Heart left ventricle (tissue), 16 donors: ENCODE measurements at regions of chr12 and their contacts with region 1.

Region 1: DNA sequence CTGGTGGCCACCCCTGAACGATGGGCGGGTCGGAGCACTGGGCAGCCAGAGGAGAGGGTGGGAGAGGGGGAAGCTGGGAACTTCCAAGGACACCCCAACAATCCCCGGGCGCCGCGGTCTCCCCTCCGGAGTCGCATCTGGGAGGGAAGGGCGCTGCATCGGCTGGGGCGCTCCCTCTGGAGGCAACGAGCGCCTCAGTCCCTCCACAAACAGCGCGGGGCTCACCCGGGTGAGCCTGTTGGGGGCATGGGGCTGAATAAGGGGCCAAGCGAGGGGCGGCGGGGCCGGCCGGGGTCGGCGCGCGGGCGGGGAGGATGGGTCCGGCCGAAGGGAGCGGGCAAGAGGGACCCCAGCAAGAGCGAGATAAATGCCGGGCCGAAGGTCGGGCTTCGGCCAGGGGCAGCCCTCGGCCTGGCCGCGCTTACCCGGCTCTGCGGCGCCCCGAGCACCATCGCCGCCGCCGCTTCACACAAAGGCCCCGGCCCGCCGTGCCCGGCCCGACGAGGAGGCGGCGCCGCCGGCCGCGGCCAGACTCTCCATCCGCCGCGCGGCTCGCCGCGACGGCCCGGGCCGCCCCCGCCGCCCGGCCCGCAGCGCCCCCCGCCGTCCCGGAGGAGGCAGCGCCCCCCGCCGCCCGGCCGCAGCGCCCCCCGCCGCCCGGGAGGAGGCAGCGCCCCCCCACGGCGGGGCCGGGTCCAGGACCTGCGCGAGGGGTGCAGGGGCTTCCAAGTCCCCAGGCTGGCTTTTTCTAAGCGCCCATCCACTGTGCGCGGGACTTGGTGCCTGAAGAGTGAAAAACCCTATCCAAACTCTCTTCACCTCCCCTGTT is at the start of gene ZBTB39:
- DNase-seq: peak; percentile 58 to 84 (median 68)
- ATAC-seq: peak; percentile 52 to 89 (median 76)
- H3K4me3 ChIP-seq: peak within 1 kb of the TSS; percentile 83 to 100 (median 96)
- H3K27ac ChIP-seq: peak within 1 kb of the TSS; percentile 19 to 92 (median 84)
- H3K4me1 ChIP-seq: peaks cover 0 to 30% (median 23%) of the 10 kb centered on the region in 12 donors
- H3K27me3 ChIP-seq: no peaks in the 10 kb centered on the region
- CTCF ChIP-seq: peak; percentile 40 to 76 (median 66)
- POLR2A ChIP-seq: no peak
- total RNA-seq, gene ZBTB39: 2.7 to 4.5 (median 3.6) TPM

Region 2: GRCh38 chr12:56616925-56617324 is 389.3 kb before region 1 on chr12:
- intact Hi-C with region 1: no loop called
- DNase-seq: no peak
- ATAC-seq: peak; percentile 78 to 84 (median 82)
- H3K4me3 ChIP-seq: no peak overlapping the region
- H3K27ac ChIP-seq: peak overlapping the region in 8 of 12 donors; percentile 23 to 80 (median 63)
- H3K4me1 ChIP-seq: peaks cover 0 to 68% (median 29%) of the 10 kb centered on the region in 12 donors
- H3K27me3 ChIP-seq: no peaks in the 10 kb centered on the region
- CTCF ChIP-seq: no peak
- POLR2A ChIP-seq: no peak

Region 3: GRCh38 chr12:56839915-56840325 is 166.3 kb before region 1 on chr12:
- intact Hi-C with region 1: loop called in 1 of 10 experiments (anchors 10 kb)
- DNase-seq: peak; percentile 26 to 68 (median 32)
- ATAC-seq: peak in 3 of 4 donors; percentile 46 to 56 (median 54)
- H3K4me3 ChIP-seq: no peak overlapping the region
- H3K27ac ChIP-seq: no peak overlapping the region
- H3K4me1 ChIP-seq: peaks cover 0 to 30% (median 6%) of the 10 kb centered on the region in 12 donors
- H3K27me3 ChIP-seq: no peaks in the 10 kb centered on the region
- CTCF ChIP-seq: peak; percentile 20 to 56 (median 40)
- POLR2A ChIP-seq: no peak

Region 4: GRCh38 chr12:56947633-56948456 is 58.3 kb before region 1 on chr12:
- intact Hi-C with region 1: loop called in 2 of 10 experiments (anchors 5 kb)
- DNase-seq: no peak
- ATAC-seq: no peak
- H3K4me3 ChIP-seq: no peak overlapping the region
- H3K27ac ChIP-seq: no peak overlapping the region
- H3K4me1 ChIP-seq: no peaks in the 10 kb centered on the region
- H3K27me3 ChIP-seq: no peaks in the 10 kb centered on the region
- CTCF ChIP-seq: peak in 5 of 12 donors; percentile 25 to 39 (median 34)
- POLR2A ChIP-seq: no peak

Region 5: GRCh38 chr12:57063991-57064685 is 57.9 kb after region 1 on chr12:
- intact Hi-C with region 1: loop called in 6 of 10 experiments (anchors 2 to 5 kb)
- DNase-seq: no peak
- ATAC-seq: no peak
- H3K4me3 ChIP-seq: peak overlapping the region in 1 of 12 donors; percentile 35
- H3K27ac ChIP-seq: peak overlapping the region in 1 of 12 donors; percentile 88
- H3K4me1 ChIP-seq: peaks cover 0 to 25% (median 0%) of the 10 kb centered on the region in 12 donors
- H3K27me3 ChIP-seq: no peaks in the 10 kb centered on the region
- CTCF ChIP-seq: no peak
- POLR2A ChIP-seq: no peak